ENCODE measurements at regions of chr12 and their contacts with region 1.

Region 1: GRCh38 chr12:113048716-113049127 is 7.8 kb upstream of the DTX1 start:
- DNase-seq: no peak
- H3K4me3 ChIP-seq: no peak overlapping the region
- H3K27ac ChIP-seq: no peak overlapping the region
- H3K4me1 ChIP-seq: no peaks in the 10 kb centered on the region
- H3K27me3 ChIP-seq: no peaks in the 10 kb centered on the region
- CTCF ChIP-seq: peak; percentile 50 to 78 (median 76)

Region 2: DNA sequence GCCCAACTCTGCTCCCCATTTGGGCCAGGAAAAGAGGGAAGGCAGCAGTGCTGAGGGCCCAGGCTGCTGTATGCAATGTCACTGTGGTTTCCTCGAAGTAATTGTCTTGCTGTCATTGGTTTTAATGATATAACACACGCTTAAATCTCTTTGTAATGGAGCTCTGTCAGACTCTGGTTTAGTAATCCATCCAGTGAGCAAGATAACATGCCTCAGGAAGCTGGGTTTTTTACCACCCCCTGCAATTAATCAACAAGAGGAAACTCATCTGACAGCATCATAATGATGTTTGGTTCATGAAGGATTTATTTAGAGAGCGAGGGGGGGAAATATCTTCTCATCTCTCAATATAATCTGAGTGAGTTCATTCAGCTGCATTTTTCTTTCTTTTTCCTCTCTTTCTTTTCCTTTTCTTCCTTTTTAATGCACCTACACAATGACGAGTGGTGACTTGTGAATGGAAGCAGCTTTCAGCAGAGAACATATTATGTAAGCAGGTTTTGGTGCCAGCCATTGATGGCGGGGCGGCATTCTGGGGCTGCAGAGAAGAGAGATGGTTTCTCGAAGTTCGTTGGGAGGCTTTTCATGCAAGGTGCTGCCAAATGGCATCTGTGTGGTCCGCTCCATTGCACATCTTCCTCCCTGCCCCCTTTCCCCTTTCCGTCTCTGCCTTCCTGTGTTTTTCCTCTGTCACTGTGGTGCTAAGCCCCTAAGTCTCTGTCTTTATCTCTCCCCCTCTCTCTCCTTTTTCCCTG is 250.5 kb before region 1 on chr12:
- intact Hi-C with region 1: no loop called
- DNase-seq: no peak
- H3K4me3 ChIP-seq: no peak overlapping the region
- H3K27ac ChIP-seq: no peak overlapping the region
- H3K4me1 ChIP-seq: no peaks in the 10 kb centered on the region
- H3K27me3 ChIP-seq: no peaks in the 10 kb centered on the region
- CTCF ChIP-seq: no peak

Region 3: DNA sequence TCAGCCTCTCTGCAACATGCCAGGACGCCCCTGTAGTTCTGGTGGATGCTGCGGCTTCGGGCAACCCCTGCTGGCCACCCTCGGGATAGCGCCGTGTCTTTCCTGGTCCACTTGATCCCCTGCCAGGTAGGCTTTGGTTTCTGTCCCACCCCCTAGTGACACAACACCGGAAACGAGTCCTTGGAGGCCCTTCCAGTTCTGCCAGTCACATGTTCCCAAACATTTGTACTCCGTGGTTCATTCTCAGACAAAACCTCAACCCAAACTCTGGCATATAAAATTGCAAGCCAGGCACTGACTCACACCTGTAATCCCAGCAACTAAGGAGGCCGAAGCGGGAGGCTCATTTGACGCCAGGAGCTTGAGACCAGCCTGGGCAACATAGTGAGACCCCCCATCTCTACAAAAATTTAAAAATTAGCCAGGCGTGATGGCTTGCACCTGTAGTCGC is 49.7 kb after region 1 on chr12:
- intact Hi-C with region 1: loop called (anchors 1 kb)
- DNase-seq: peak in 1 of 2 donors; percentile 91
- H3K4me3 ChIP-seq: no peak overlapping the region
- H3K27ac ChIP-seq: no peak overlapping the region
- H3K4me1 ChIP-seq: no peaks in the 10 kb centered on the region
- H3K27me3 ChIP-seq: peaks cover 3% of the 10 kb centered on the region
- CTCF ChIP-seq: peak; percentile 70 to 72 (median 72)

Region 4: GRCh38 chr12:113152835-113153814 is 104.4 kb after region 1 on chr12:
- intact Hi-C with region 1: loop called (anchors 1 kb)
- DNase-seq: no peak
- H3K4me3 ChIP-seq: peak overlapping the region; percentile 56 to 57
- H3K27ac ChIP-seq: no peak overlapping the region
- H3K4me1 ChIP-seq: peaks cover 0 to 9% of the 10 kb centered on the region in 2 donors
- H3K27me3 ChIP-seq: no peaks in the 10 kb centered on the region
- CTCF ChIP-seq: peak in 1 of 3 experiments; percentile 48

Region 5: GRCh38 chr12:113174461-113175384 is 126.0 kb after region 1 on chr12:
- intact Hi-C with region 1: loop called (anchors 1 kb)
- DNase-seq: peak in 1 of 2 donors; percentile 77
- H3K4me3 ChIP-seq: no peak overlapping the region
- H3K27ac ChIP-seq: no peak overlapping the region
- H3K4me1 ChIP-seq: no peaks in the 10 kb centered on the region
- H3K27me3 ChIP-seq: no peaks in the 10 kb centered on the region
- CTCF ChIP-seq: peak; percentile 79 to 99 (median 98)

Region 6: GRCh38 chr12:113912760-113913329 is 864.1 kb after region 1 on chr12:
- intact Hi-C with region 1: loop called (anchors 5 kb)
- DNase-seq: peak in 1 of 2 donors; percentile 67
- H3K4me3 ChIP-seq: no peak overlapping the region
- H3K27ac ChIP-seq: no peak overlapping the region
- H3K4me1 ChIP-seq: no peaks in the 10 kb centered on the region
- H3K27me3 ChIP-seq: no peaks in the 10 kb centered on the region
- CTCF ChIP-seq: peak; percentile 48 to 85 (median 75)

Measured in ascending aorta (tissue), 2 donors.